ENCODE measurements at regions of chr2 and their contacts with region 1.

Region 1: DNA sequence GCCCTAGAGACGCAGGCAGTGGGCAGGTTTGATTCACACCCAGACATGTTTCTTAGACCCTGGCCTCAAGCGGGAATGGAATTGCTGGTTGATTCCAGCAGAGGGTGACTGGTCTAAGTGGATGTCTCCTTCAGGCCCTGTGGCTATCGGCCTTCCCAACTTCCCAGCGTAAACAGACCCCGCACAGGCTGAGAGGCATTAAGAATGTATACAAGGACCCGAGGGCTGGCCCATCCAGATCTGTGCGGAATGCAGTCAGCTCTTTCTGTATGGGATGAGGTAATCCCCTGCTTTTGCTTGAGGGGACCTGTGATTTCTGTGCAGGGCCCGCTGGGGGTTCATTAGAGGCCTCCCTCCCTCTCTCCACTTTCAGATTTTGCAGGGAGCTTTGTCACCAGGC is 6.5 kb downstream of the ACKR3 start:
- DNase-seq: peak; percentile 62

Region 2: DNA sequence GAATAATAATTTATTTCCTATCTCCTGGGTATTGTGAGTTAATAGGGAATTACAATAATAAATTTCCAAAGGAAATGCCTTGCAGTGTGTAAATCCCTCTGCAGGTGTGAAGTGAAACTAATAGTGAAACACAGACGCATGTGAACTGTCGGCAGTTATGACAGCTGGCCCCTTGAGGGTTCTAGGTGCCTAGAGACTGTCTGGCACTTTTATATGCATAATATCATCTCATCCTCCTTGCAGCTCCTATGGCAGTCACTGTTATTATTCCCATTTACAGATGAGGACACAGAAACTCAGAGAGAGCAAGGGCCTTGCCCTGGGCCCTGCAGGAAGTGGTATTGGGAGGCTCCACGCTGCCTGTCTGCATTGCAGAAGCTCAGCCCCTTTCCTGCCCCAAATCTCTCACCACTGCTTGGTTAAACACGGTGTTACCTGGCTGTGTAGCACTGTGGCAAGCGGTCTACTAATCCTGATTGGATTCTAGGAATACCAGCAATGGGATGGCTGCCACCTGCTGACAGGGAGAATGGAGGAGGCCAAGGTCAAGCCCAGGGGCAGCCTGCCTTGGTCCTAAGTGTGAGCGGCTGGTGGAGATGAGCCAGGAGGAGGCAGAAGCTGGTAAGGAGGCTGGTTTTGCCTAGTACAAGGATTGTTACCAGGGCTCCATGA is 39.2 kb before region 1 on chr2:
- intact Hi-C with region 1: no loop called
- DNase-seq: no peak

Region 3: GRCh38 chr2:236631281-236631855 is 55.3 kb after region 1 on chr2:
- intact Hi-C with region 1: loop called in 1 of 2 experiments (anchors 5 kb)
- DNase-seq: peak; percentile 81

Region 4: DNA sequence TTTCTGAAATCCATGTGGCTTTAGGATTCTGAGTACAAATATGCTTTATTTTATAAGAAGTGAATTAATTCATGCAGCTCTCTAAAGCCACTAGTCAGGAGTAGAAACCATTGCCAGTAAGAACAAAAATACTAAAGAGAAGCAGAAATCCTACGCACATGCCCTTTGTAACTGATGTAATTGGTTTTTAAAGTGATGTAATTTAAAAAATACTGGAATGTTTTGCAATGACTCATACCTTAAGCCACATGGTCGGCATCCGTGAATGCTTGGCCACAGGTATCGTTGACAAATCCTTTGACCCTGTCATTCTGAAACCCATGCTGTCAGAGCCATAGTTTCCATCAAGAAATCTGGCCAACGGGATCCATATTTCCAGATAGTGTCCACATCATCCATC is 206.9 kb after region 1 on chr2:
- intact Hi-C with region 1: loop called in 1 of 2 experiments (anchors 10 kb)
- DNase-seq: peak; percentile 17

Region 5: DNA sequence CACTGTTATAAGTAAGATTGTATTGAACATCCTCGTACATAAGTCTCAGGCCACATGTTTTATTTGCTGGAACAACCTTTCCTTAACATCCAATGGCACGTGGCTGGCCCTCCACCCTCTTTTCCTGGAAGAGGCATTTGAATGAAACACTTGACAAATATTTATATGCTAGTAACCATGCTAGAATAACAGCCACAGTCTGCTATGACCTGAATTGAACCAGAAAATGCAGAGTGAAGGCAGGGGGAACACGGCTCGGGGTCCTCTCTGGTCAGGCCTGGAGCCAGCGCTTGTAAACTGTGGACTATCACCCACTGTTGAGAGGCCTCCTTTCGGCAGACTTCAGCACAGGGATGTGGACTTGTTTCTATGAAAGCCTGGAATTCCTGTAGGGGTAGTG is 311.4 kb after region 1 on chr2:
- intact Hi-C with region 1: loop called in 1 of 2 experiments (anchors 10 kb)
- DNase-seq: peak; percentile 91

Region 6: DNA sequence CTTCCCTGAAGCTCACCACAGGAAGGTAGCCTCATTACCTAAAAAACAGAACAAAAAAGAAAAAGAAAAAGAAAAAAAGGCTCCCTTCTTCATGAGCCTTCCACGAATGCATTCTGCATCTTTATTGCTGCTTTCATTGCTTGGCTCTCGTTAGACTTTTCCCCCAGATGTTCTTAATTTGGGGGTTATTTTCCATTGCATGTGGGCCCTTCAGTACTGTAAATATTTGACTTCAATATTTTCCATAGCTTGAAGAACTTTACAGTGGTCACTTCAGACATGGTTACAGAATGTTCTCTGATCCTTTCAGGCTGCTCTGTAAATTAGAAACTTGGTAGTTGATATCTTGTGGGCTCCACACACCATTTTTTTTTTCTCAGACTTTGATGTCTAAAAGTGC is 444.0 kb after region 1 on chr2:
- intact Hi-C with region 1: loop called in 1 of 2 experiments (anchors 5 kb)
- DNase-seq: no peak

Measured in posterior vena cava (tissue), 2 donors.